Head of caudate nucleus (tissue), 42 donors: ENCODE measurements at regions of chr5 and their contacts with region 1.

Region 1: GRCh38 chr5:168291464-168291961 is at the start of gene WWC1:
- DNase-seq: peak in 41 of 42 donors; percentile 32 to 88 (median 67)

Region 2: GRCh38 chr5:168417731-168418429 is 126.4 kb after region 1 on chr5:
- intact Hi-C with region 1: loop called (anchors 5 kb)
- DNase-seq: no peak

Region 3: DNA sequence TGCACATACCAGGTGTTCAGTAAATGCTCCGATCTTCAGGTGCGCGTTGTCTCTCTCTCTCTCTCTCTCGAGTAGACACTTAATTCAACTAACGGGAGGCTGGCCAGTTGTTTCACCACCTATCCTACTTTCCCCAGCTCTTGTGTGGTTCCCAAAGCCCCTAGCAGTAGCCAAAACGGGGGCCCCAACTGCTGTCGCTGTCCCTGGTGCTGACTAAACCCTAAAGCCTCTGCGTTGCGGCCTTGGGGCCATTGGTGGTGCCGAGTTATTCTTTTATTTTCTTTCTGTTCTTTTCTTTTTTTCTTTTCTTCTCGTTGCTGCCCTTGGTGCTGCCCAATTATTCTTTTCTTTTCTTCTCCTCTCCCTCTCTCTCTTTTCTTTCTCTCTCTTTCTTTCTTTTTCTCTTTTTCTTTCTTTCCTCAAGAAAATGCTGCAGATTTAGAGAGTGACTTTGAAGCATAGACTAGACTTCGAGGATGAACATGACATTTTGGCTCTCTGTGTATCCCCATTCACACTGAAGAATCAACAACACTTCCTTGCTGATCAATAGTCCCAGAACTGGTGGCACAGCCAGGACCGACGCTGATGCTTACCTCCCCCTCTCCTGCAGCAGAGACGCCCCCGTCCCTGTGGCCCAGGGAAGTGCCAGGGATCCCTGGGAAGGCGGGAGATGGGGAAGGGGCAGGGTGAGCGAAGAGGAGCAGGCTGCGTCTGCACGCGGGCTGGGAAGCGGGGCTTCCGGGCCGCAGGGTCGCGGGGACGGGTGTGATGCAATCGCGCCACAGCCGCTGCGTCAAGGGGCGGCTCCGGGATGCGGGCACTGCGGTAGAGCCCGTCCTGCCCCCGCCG is 237.2 kb after region 1 on chr5 and contains the start of gene FBLL1:
- intact Hi-C with region 1: no loop called
- DNase-seq: peak in 41 of 42 donors; percentile 12 to 85 (median 56)